AG04450 (cell line): ENCODE measurements at regions of chr12 and their contacts with region 1.

Region 1: GRCh38 chr12:91382081-91382543 is 199.5 kb upstream of the DCN start:
- DNase-seq: peak; percentile 62
- H3K4me3 ChIP-seq: peak overlapping the region; percentile 61
- H3K27ac ChIP-seq: no peak overlapping the region
- H3K27me3 ChIP-seq: no peaks in the 10 kb centered on the region
- CTCF ChIP-seq: peak; percentile 94

Region 2: GRCh38 chr12:91256411-91256810 is 125.7 kb before region 1 on chr12:
- CTCF ChIA-PET with region 1: no interaction called
- POLR2A ChIA-PET with region 1: no interaction called
- DNase-seq: no peak
- H3K4me3 ChIP-seq: no peak overlapping the region
- H3K27ac ChIP-seq: no peak overlapping the region
- H3K27me3 ChIP-seq: no peaks in the 10 kb centered on the region
- CTCF ChIP-seq: no peak

Region 3: GRCh38 chr12:91361864-91362263 is 20.2 kb before region 1 on chr12:
- CTCF ChIA-PET with region 1: interaction called, 10 read pairs
- POLR2A ChIA-PET with region 1: no interaction called
- DNase-seq: no peak
- H3K4me3 ChIP-seq: no peak overlapping the region
- H3K27ac ChIP-seq: no peak overlapping the region
- H3K27me3 ChIP-seq: no peaks in the 10 kb centered on the region
- CTCF ChIP-seq: peak; percentile 65

Region 4: GRCh38 chr12:91577586-91578539 is 195.8 kb after region 1 on chr12:
- CTCF ChIA-PET with region 1: interaction called, 32 read pairs
- POLR2A ChIA-PET with region 1: interaction called, 3 read pairs
- DNase-seq: no peak
- H3K4me3 ChIP-seq: peak overlapping the region; percentile 3; the same call in 1 of the 2 replicates
- H3K27ac ChIP-seq: no peak overlapping the region
- H3K27me3 ChIP-seq: no peaks in the 10 kb centered on the region
- CTCF ChIP-seq: peak; percentile 53

Region 5: DNA sequence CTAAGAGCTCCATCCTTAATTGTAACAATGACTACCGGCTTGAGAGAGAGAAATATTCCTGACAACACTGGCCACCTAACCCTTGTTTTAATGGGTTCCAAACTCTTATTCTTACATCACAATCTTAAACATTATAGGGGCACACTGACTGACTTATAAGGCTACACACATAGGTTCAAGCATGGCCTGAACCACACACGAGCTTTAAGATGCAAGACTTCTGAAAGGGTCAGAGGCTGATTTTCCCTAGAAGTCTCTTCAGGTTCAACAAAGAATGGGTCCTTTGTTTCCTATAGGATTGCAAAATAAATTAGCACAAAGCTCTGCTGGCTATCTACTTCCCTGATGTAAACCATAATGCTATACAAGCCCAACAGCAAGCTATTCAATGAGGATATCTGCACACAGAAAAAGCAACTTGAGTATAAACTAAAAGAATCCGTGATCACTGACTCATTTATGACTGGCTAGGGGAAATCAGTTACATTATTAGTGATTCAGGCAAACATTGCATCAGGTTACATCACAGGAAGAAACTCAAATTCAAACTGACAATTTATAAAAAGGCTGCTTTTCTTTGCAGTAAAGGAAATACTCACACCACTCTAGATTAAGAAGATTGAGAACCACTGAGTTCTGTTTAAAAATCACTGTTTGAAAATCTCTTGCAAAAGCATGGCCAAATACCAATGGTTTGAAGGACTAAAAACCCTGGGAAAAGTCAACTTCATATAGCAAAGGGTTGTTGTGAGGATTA is 755.0 kb after region 1 on chr12:
- CTCF ChIA-PET with region 1: interaction called, 53 read pairs
- POLR2A ChIA-PET with region 1: interaction called, 4 read pairs
- DNase-seq: peak; percentile 82
- H3K4me3 ChIP-seq: peak overlapping the region; percentile 29
- H3K27ac ChIP-seq: peak overlapping the region; percentile 48
- H3K27me3 ChIP-seq: no peaks in the 10 kb centered on the region
- CTCF ChIP-seq: no peak

Region 6: GRCh38 chr12:92561543-92561899 is 1179.4 kb after region 1 on chr12:
- CTCF ChIA-PET with region 1: interaction called, 17 read pairs
- POLR2A ChIA-PET with region 1: no interaction called
- DNase-seq: peak; percentile 79
- H3K4me3 ChIP-seq: no peak overlapping the region
- H3K27ac ChIP-seq: no peak overlapping the region
- H3K27me3 ChIP-seq: no peaks in the 10 kb centered on the region
- CTCF ChIP-seq: no peak

Region 7: GRCh38 chr12:92639017-92639416 is 1256.9 kb after region 1 on chr12:
- CTCF ChIA-PET with region 1: interaction called, 13 read pairs
- POLR2A ChIA-PET with region 1: no interaction called
- DNase-seq: no peak
- H3K4me3 ChIP-seq: no peak overlapping the region
- H3K27ac ChIP-seq: no peak overlapping the region
- H3K27me3 ChIP-seq: no peaks in the 10 kb centered on the region
- CTCF ChIP-seq: no peak